ENCODE measurements at regions of chr2 and their contacts with region 1.

Region 1: GRCh38 chr2:204325468-204325867 is 219.8 kb upstream of the PARD3B start:
- DNase-seq: peak; percentile 89
- H3K4me3 ChIP-seq: no peak overlapping the region
- H3K27ac ChIP-seq: no peak overlapping the region
- H3K4me1 ChIP-seq: peaks cover 19% of the 10 kb centered on the region
- H3K27me3 ChIP-seq: no peaks in the 10 kb centered on the region
- CTCF ChIP-seq: peak; percentile 61 to 68
- POLR2A ChIP-seq: no peak

Region 2: DNA sequence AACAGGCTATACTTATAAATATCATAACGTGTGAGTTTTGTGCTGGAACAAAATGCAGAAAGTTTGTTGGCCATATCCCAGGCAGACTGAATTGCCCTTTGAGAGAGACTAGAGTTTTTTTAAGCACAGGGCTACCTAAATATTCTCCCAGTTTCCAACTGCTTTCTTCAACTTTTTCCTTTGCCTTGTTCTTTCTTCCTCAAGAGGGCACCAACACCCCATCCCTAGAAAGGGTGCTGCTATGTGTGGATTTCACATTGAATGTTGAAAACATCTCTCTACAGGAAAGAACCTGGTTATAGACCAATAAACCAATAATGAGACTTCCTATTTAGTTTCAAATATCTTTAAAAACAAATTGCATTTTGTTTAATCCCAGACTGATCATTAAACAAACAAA is 301.0 kb before region 1 on chr2:
- CTCF ChIA-PET with region 1: interaction called, 8 read pairs
- POLR2A ChIA-PET with region 1: no interaction called
- dilution Hi-C with region 1: no loop called
- intact Hi-C with region 1: loop called (anchors 1 kb)
- DNase-seq: peak; percentile 81
- H3K4me3 ChIP-seq: no peak overlapping the region
- H3K27ac ChIP-seq: no peak overlapping the region
- H3K4me1 ChIP-seq: peaks cover 13% of the 10 kb centered on the region
- H3K27me3 ChIP-seq: no peaks in the 10 kb centered on the region
- CTCF ChIP-seq: peak; percentile 54 to 59
- POLR2A ChIP-seq: no peak

Region 3: DNA sequence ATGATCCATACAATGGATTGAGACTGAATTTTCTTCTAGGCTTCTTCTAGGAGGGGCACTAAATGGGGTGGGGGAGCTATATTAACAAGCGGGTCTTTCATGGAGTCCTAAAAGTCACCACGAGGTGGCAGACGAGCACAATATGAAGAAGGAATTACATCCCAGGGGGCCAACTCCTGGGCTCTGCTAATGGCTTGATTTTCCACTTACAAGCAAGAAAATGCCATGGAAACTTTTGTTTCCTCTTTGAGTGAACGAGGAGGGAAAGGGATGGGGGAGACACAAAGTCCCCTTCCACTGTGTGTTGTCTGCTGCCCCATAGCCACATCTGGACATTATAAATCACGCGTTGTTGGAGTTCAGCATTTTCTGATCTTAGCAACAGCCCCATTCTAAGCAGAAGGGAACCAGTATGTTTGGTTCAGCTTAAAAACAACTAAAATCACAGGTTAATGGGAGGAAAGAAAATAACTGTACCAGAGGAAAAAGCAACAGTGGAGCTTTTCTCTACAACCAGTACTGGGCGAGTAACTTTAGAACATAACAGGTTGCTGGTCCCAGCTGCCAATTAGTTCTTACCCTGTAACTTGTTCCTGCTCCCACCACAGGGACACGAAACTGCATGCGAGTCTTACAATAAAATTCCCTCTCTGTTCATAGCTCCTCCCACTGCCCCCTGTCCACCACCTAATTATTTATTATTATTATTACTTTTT is 65.1 kb before region 1 on chr2:
- CTCF ChIA-PET with region 1: interaction called, 17 read pairs
- POLR2A ChIA-PET with region 1: no interaction called
- dilution Hi-C with region 1: no loop called
- intact Hi-C with region 1: loop called (anchors 1 kb)
- DNase-seq: peak; percentile 86
- H3K4me3 ChIP-seq: no peak overlapping the region
- H3K27ac ChIP-seq: no peak overlapping the region
- H3K4me1 ChIP-seq: peaks cover 6% of the 10 kb centered on the region
- H3K27me3 ChIP-seq: peaks cover 0 to 2% of the 10 kb centered on the region in 2 experiments
- CTCF ChIP-seq: peak; percentile 63 to 72
- POLR2A ChIP-seq: no peak

Region 4: DNA sequence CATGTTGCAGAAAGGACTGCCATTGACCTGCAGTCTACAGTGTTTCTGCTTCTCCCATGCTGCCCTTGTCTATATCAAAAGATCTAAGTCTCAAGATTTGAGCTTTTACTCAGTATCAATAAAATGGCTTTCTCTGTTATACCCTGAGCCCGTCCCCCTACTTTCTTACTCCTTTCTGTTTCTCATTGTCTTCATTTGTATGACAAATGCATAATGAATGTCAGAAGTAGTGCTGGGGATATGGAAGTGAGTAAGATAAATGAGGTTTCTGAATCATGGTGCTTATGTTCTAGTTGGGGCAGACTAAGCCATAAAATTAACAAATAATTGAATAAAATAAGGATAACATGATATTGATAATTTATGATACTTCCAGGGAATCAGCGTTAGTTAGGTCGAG is 348.4 kb after region 1 on chr2:
- CTCF ChIA-PET with region 1: no interaction called
- POLR2A ChIA-PET with region 1: no interaction called
- dilution Hi-C with region 1: no loop called
- intact Hi-C with region 1: loop called (anchors 1 kb)
- DNase-seq: peak; percentile 69
- H3K4me3 ChIP-seq: no peak overlapping the region
- H3K27ac ChIP-seq: peak overlapping the region; percentile 83
- H3K4me1 ChIP-seq: peaks cover 56% of the 10 kb centered on the region
- H3K27me3 ChIP-seq: no peaks in the 10 kb centered on the region
- CTCF ChIP-seq: no peak
- POLR2A ChIP-seq: no peak

Region 5: GRCh38 chr2:204842661-204843485 is 517.4 kb after region 1 on chr2:
- CTCF ChIA-PET with region 1: no interaction called
- POLR2A ChIA-PET with region 1: no interaction called
- dilution Hi-C with region 1: no loop called
- intact Hi-C with region 1: loop called (anchors 1 kb)
- DNase-seq: peak; percentile 92
- H3K4me3 ChIP-seq: peak overlapping the region in 1 of 3 experiments; percentile 15
- H3K27ac ChIP-seq: peak overlapping the region; percentile 84
- H3K4me1 ChIP-seq: peaks cover 25% of the 10 kb centered on the region
- H3K27me3 ChIP-seq: no peaks in the 10 kb centered on the region
- CTCF ChIP-seq: no peak
- POLR2A ChIP-seq: no peak

Region 6: DNA sequence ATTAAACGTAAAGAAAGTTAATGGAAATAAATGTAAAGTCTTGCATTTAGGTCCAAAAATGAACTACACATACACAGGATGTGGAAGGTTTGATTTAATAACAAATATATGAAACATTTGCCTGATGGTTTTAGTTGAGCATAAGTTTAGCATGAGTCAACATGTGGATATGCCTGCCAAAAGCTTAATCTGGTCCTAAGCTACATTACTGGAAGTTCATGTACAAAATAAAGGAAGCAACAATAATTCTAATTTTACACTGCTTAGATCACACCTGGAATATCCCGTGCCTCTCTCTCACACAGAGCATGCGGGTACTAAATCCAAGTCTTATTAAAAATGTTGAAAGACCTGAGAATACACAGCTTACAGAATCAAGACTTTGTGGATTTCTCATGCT is 1080.3 kb after region 1 on chr2:
- CTCF ChIA-PET with region 1: no interaction called
- POLR2A ChIA-PET with region 1: no interaction called
- dilution Hi-C with region 1: no loop called
- intact Hi-C with region 1: loop called (anchors 10 kb)
- DNase-seq: peak; percentile 87
- H3K4me3 ChIP-seq: no peak overlapping the region
- H3K27ac ChIP-seq: peak overlapping the region; percentile 54
- H3K4me1 ChIP-seq: peaks cover 26% of the 10 kb centered on the region
- H3K27me3 ChIP-seq: no peaks in the 10 kb centered on the region
- CTCF ChIP-seq: no peak
- POLR2A ChIP-seq: no peak

Measured in endothelial cell of umbilical vein (primary cell).